HEK293T (cell line): ENCODE measurements at regions of chr3 and their contacts with region 1.

Region 1: DNA sequence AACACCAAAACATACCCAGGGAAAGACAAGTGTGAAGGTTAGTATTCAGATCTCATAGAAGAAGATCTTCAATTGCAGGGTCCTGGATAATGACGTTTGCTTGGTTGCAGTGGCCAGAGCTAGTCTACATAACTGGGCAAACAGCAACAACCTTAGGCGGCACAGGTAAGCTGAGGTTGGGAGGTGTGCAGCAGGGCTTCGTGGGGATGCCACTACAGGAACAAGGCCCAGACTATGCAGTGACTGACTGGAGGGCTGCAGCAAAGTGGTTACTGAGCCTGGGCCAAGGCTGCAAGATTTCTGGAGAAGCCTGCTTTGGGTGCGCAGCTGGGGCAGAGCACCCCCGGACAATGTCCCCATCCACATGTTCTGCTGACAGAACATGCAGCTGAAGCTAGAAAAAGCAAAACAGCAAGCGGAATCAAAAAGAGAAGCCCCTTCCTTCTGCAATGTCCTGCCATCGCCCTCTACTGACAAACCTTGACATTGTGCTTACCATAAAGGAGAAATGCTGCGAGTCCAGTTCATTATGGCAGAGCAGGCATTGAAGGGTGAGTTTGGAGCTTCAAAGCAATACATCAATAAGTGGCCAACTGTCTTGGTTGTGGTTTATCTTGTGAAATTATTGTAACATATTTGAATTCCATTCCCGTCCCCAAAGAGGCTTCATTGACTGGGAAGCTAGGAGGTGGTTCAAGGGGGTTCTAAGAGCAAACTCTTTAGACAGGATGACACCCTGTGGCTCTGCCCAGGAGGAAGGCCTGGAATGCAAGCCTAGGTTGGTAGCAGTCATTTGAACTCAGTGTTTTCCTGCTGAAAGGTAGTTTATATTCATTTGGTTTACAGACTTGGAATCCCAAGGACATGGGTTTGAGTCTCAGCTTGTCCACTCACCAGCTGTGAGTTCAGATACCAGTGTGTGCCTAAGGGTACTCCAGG is 217.0 kb downstream of the PDCD6IP start:
- DNase-seq: peak; percentile 30

Region 2: GRCh38 chr3:33915791-33916546 is 99.5 kb before region 1 on chr3:
- CTCF ChIA-PET with region 1: interaction called, 15 read pairs
- POLR2A ChIA-PET with region 1: no interaction called
- DNase-seq: no peak

Region 3: DNA sequence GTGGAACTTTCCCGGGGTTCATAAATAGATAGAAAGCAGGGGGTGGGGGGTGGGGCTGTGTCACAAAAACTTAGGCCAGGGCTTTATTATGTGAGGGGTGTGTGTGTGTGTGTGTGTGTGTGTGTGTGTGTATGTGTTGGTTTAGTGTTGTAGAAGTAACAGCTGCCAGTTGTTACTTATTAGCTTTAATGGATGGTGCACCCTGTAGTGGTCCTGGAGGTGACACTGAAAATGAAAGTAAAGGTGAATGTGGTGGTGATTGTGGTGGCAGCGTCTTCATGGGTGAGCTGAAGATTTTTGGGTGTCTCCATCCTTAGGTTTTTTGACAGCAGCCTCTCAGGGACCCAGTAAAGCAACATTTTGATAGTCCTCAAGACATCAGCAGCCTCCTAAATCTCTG is 232.9 kb after region 1 on chr3:
- CTCF ChIA-PET with region 1: no interaction called
- POLR2A ChIA-PET with region 1: no interaction called
- DNase-seq: no peak